MCF 10A (cell line): ENCODE measurements at regions of chrX and their contacts with region 1.

Region 1: DNA sequence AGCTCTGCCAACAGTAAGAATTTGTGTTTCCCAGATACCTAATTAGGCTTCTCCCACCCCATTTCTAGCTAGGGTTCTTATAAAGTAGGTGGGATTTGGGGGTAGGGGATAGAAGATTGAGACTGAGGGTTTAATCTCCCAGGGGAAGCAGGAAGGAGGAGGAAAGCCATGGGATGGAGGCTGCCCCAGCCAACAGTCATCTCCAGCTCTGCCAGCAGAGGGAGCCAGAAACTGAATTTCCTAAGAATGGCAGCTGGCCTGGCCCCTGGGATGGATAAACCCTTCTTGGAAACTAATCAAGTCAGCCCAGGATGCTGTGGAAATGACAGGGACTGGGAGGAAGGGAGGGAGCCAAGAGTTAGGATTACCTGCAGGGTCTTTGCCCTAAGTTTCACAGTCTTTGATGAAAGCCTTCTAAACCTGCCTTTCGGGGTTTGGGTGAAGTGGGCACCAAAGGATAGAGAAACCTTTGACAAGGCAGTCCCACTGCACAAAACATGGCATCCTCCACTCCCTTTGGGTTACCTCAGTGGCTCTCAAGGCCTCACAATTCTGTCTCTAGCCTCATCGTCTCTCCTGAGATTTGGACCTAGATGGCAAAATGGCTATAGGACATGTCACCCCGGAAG is 6.7 kb upstream of the ERCC6L start:
- DNase-seq: peak; percentile 77
- H3K4me3 Mint-ChIP-seq: no peak overlapping the region
- H3K27ac Mint-ChIP-seq: no peak overlapping the region
- H3K4me1 Mint-ChIP-seq: no peaks in the 10 kb centered on the region
- H3K27me3 Mint-ChIP-seq: peaks cover 45% of the 10 kb centered on the region
- CTCF ChIP-seq: peak; percentile 73

Region 2: DNA sequence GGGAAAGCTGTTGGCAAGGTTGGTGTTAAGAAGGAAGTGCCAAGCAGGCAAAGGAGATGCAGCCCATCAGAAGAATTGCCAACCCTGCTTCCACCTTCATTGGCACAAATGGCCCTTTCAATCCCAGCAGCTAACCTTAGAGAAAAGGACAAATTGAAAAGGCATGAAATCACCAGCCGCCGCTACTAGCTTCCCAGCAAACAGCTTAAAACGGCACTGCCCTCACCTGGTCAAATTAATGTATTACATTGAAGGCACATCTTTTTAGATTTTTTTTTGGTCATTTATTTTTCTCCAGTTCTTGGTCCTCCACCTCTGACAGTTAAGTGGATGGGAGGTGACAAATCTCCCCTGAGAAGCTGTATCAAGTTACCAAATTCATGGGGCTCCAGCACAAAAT is 385.9 kb before region 1 on chrX:
- CTCF ChIA-PET with region 1: no interaction called
- POLR2A ChIA-PET with region 1: no interaction called
- intact Hi-C with region 1: no loop called
- DNase-seq: peak; percentile 61
- H3K4me3 Mint-ChIP-seq: no peak overlapping the region
- H3K27ac Mint-ChIP-seq: no peak overlapping the region
- H3K4me1 Mint-ChIP-seq: peaks cover 5% of the 10 kb centered on the region
- H3K27me3 Mint-ChIP-seq: peaks cover 94% of the 10 kb centered on the region
- CTCF ChIP-seq: peak; percentile 62

Region 3: DNA sequence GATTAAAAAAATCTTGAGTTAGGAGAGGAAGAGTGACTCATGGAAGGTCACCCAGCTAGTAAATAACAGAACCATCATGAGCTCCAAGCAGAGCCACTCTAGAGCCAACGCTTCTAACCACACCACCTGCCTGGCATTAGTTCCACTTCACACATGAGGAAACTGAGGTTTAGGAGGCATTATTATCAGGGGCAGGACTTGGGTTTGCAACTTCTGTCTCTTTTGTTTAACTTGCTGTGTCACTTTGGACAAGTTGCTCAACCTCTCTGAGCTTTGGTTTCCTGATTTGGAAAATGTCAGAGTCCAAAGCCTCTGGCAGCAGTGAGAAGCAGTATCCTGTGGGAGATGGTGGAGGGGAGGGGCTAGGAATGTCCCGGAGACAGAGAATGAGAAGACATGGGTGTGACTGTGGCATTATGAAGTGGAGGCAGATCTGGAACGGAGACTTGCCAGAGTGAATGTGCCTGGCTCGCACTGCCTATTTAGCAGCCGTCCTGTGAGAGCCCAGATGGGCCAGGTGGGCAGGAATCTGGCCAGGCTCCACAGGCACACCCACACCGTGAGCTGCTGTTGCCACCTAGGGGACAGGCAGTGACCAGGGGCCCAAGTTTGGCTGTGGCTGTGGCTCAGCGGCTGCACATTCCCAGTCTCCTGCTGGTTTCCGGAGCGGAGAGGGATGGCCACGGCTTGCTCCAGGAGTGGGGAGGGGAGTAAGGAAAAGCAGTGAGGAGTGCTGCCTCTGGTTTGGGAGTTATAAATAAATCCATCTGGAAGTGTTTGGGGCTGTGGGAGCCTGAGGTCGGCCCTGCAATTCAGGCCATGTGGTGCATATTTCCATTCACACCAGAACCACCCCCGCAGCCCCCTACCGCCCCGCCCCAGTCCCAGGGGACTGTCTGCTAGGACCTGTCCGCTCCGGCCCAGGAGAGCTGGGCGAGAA is 241.5 kb before region 1 on chrX:
- CTCF ChIA-PET with region 1: no interaction called
- POLR2A ChIA-PET with region 1: no interaction called
- intact Hi-C with region 1: no loop called
- DNase-seq: no peak
- H3K4me3 Mint-ChIP-seq: no peak overlapping the region
- H3K27ac Mint-ChIP-seq: no peak overlapping the region
- H3K4me1 Mint-ChIP-seq: no peaks in the 10 kb centered on the region
- H3K27me3 Mint-ChIP-seq: peaks cover 88% of the 10 kb centered on the region
- CTCF ChIP-seq: no peak

Region 4: DNA sequence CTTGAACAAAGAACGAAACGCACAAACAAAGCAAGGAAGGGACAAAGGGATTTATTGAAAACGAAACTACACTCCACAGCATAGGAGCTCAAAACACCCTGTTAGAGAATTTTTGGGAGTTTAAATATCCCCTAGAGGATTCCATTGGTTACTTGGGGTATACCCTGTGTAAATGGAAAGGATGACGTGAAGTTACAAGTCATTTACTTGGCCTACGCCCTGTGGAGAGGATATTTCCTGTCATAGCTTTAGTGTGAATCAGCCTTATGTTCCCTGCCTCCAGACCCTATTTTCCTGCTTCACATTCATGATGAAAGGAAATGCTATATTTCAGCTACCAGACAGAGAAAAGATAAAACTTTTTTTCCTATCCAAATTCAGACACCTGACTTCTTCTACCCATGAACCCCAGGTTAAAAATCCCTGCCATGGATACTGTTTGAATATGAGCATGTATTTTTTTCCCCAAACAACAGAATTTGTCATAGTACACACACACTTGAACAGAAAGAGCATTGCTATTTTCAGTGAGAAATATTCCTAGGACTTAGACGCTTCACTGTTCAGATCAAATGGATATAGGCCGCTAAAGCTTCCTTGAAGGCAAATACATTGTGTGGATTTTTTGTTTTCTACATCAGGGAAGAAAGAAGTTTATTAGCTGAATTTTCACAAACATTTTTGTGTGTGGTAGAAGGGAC is 43.6 kb before region 1 on chrX:
- CTCF ChIA-PET with region 1: no interaction called
- POLR2A ChIA-PET with region 1: no interaction called
- intact Hi-C with region 1: no loop called
- DNase-seq: peak; percentile 42
- H3K4me3 Mint-ChIP-seq: no peak overlapping the region
- H3K27ac Mint-ChIP-seq: peak overlapping the region; percentile 52
- H3K4me1 Mint-ChIP-seq: no peaks in the 10 kb centered on the region
- H3K27me3 Mint-ChIP-seq: peaks cover 54% of the 10 kb centered on the region
- CTCF ChIP-seq: no peak

Region 5: DNA sequence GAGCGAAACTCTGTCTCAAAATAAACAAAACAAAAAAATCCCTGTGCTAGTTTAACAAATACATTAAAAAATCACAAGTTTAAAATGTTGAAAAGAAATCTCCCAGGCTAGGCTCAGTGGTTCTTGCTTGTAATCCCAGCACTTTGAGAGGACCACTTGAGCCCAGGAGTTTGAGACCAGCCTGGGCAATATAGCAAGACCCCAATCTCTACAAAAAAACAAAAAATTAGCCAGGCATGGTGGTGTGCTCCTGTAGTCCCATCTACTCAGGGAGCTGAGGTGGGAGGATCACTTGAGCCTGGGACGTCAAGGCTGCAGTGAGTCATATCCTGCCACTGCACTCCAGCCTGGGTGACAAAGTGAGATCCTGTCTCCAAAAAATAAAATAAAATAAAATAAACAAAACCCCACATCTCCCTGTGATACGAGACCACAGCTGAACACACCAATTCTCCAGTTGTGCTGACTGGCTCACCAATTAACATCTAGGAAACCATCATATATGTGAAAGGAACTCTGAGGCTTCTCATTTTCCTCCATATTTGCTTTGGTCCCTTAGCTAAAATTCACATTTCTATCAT is 24.2 kb after region 1 on chrX:
- CTCF ChIA-PET with region 1: interaction called, 15 read pairs
- POLR2A ChIA-PET with region 1: interaction called, 4 read pairs
- intact Hi-C with region 1: no loop called
- DNase-seq: peak; percentile 59
- H3K4me3 Mint-ChIP-seq: no peak overlapping the region
- H3K27ac Mint-ChIP-seq: peak overlapping the region; percentile 19
- H3K4me1 Mint-ChIP-seq: peaks cover 31% of the 10 kb centered on the region
- H3K27me3 Mint-ChIP-seq: no peaks in the 10 kb centered on the region
- CTCF ChIP-seq: no peak

Region 6: DNA sequence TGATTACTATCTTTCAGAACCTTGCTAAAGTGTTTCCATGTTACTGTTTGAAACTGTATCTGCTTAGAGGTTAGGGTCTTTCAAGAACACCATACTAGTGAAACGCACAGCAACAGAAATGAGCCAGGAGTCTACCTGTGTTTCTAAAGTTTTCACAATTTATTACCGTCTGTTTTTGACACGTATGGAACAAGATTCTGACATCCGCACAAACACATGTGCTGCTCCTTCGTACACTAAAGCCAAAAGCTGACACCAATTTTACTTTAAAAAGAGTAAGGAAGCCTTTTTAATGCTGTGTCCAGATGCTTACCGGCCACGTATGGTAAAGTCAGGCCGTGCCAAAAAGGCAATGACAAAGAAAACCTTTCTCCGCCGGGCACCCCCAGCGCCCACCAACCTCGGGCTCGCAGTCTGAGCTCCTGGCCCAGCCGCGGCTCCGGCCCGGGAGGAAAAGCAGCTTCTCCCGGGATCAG is 30.9 kb after region 1 on chrX:
- CTCF ChIA-PET with region 1: interaction called, 25 read pairs
- POLR2A ChIA-PET with region 1: interaction called, 6 read pairs
- intact Hi-C with region 1: no loop called
- DNase-seq: no peak
- H3K4me3 Mint-ChIP-seq: peak overlapping the region; percentile 90
- H3K27ac Mint-ChIP-seq: peak overlapping the region; percentile 99
- H3K4me1 Mint-ChIP-seq: peaks cover 41% of the 10 kb centered on the region
- H3K27me3 Mint-ChIP-seq: peaks cover 30% of the 10 kb centered on the region
- CTCF ChIP-seq: no peak

Region 7: GRCh38 chrX:72492499-72492898 is 246.9 kb after region 1 on chrX:
- CTCF ChIA-PET with region 1: no interaction called
- POLR2A ChIA-PET with region 1: no interaction called
- intact Hi-C with region 1: no loop called
- DNase-seq: no peak
- H3K4me3 Mint-ChIP-seq: no peak overlapping the region
- H3K27ac Mint-ChIP-seq: peak overlapping the region; percentile 75
- H3K4me1 Mint-ChIP-seq: no peaks in the 10 kb centered on the region
- H3K27me3 Mint-ChIP-seq: peaks cover 82% of the 10 kb centered on the region
- CTCF ChIP-seq: no peak

Region 8: GRCh38 chrX:72540318-72540717 is 294.7 kb after region 1 on chrX:
- CTCF ChIA-PET with region 1: interaction called, 4 read pairs
- POLR2A ChIA-PET with region 1: interaction called, 3 read pairs
- intact Hi-C with region 1: loop called (anchors 1 kb)
- DNase-seq: peak; percentile 14
- H3K4me3 Mint-ChIP-seq: no peak overlapping the region
- H3K27ac Mint-ChIP-seq: no peak overlapping the region
- H3K4me1 Mint-ChIP-seq: no peaks in the 10 kb centered on the region
- H3K27me3 Mint-ChIP-seq: peaks cover 56% of the 10 kb centered on the region
- CTCF ChIP-seq: peak; percentile 27